Activated CD4-positive, alpha-beta memory T cell treated with anti-CD3 and anti-CD28 coated beads for 36 hours (primary cell): ENCODE measurements at regions of chr1 and their contacts with region 1.

Region 1: GRCh38 chr1:1273512-1274298 is at the start of gene UBE2J2:
- DNase-seq: peak; percentile 96
- H3K4me3 Mint-ChIP-seq: peak within 1 kb of the TSS; percentile 88
- H3K27ac Mint-ChIP-seq: peak within 1 kb of the TSS; percentile 62
- H3K4me1 Mint-ChIP-seq: peaks cover 32% of the 10 kb centered on the region
- H3K27me3 Mint-ChIP-seq: no peaks in the 10 kb centered on the region
- total RNA-seq, gene UBE2J2: 58.7 to 61.6 TPM

Region 2: DNA sequence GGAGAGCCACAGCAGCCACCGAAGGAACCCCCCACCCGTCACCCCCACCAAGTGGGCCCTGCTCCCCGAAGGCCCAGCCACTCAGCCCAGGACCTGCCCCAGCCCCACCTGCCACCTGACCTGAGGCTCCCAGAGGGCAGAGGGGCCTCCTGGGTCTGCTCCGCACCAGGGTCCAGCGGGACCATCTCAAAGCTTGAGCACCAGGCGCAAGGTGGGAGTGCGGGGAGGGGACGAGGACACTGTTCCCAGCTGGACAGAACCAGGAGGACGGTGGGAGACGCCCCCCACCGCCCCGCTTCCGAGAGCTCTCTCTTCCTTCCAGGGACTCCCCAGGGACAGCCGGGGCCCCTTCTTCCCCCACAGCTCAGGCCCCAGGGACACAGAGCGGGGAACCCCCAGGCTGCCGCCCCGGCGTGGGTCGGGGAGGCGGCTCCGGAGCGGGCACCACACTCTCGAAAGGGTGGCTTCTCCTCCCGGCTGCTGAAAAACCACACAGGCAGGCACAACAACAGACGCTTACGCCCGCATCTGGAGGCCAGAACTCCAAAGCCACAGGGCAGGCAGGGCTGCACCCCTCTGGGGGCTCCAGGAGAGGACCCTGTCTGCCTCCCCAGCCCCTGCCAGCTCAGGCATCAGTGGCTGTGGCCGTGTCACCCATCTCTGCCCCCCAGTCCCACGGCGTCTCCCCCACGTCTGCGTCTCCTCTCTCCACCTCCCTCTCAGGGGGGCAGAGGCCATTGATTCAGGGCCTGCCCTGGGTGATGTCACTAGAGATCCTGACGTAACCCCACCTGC is 102.0 kb before region 1 on chr1:
- CTCF ChIA-PET with region 1: no interaction called
- POLR2A ChIA-PET with region 1: no interaction called
- intact Hi-C with region 1: no loop called
- DNase-seq: peak; percentile 51
- H3K4me3 Mint-ChIP-seq: no peak overlapping the region
- H3K27ac Mint-ChIP-seq: no peak overlapping the region
- H3K4me1 Mint-ChIP-seq: peaks cover 12% of the 10 kb centered on the region
- H3K27me3 Mint-ChIP-seq: peaks cover 10% of the 10 kb centered on the region

Region 3: GRCh38 chr1:1231400-1232223 is 42.1 kb before region 1 on chr1 and contains the start of gene SDF4:
- CTCF ChIA-PET with region 1: interaction called, 3 read pairs
- POLR2A ChIA-PET with region 1: interaction called, 5 read pairs
- intact Hi-C with region 1: loop called (anchors 1 kb)
- DNase-seq: peak; percentile 98
- H3K4me3 Mint-ChIP-seq: peak within 1 kb of the TSS; percentile 94
- H3K27ac Mint-ChIP-seq: peak within 1 kb of the TSS; percentile 92
- H3K4me1 Mint-ChIP-seq: peaks cover 33% of the 10 kb centered on the region
- H3K27me3 Mint-ChIP-seq: no peaks in the 10 kb centered on the region
- total RNA-seq, gene SDF4: 302 to 305 TPM

Region 4: GRCh38 chr1:1244192-1244811 is 29.4 kb before region 1 on chr1:
- CTCF ChIA-PET with region 1: no interaction called
- POLR2A ChIA-PET with region 1: no interaction called
- intact Hi-C with region 1: no loop called
- DNase-seq: no peak
- H3K4me3 Mint-ChIP-seq: no peak overlapping the region
- H3K27ac Mint-ChIP-seq: no peak overlapping the region
- H3K4me1 Mint-ChIP-seq: no peaks in the 10 kb centered on the region
- H3K27me3 Mint-ChIP-seq: no peaks in the 10 kb centered on the region

Region 5: DNA sequence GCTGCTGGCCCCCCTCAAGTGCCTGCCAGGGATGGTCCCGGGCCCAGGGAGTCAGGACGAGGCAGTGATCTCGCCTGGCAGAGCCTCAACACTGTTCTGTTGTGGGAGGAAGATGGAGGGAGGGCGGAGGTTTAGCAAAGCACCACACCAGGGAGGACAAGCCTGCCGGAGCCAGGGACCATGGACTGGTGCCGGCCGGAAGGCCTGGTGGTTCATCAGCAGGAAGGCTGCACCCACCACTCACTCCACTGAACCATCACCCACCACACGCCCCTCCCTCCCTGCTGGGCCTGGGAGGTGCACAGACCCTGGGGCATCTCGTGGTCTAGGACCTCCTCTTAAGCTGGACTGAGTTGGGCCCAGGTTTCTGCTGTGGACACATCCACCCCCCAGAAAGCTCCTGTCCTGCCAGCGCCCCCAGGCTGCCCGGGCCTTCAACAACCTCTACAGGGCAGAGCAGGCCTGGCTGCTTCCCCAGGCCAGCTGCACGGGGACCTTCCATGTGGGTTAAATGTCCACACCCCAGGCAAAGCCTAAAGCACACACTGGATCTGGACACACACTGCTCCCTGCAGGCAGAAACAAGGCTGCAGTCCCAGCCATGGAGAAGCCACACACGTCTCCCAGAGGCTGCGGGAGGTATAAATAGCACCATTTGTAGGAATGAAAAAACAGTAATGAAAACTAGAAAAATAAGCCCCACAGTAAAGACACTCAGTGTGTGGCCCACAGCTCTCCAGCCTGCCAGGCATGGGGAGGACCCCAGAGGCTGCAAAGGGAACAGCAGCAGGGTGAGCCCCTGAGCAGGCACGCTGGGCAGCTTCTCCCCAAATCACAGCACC is 277.1 kb after region 1 on chr1:
- CTCF ChIA-PET with region 1: no interaction called
- POLR2A ChIA-PET with region 1: no interaction called
- intact Hi-C with region 1: no loop called
- DNase-seq: no peak
- H3K4me3 Mint-ChIP-seq: no peak overlapping the region
- H3K27ac Mint-ChIP-seq: no peak overlapping the region
- H3K4me1 Mint-ChIP-seq: no peaks in the 10 kb centered on the region
- H3K27me3 Mint-ChIP-seq: no peaks in the 10 kb centered on the region